ENCODE measurements at regions of chr15 and their contacts with region 1.

Region 1: DNA sequence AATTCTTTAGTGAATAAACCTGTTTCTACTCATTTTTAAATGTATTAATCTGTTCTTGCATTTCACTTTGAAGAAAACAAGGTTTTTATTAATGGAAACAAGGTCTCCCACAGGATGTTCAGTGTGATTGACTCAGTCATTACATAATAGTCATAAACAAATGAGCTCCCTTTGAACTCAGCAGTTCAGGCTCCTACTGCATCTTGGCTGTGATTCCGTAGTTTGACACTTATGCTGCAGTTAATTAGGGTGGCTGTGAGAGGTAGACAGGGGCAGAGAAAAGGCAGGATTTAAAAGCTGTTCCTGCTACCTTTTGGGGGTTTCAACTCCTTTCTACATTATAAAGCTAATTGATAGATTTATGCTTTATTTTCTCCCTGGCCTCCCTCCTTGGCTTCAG is 345.2 kb upstream of the NR2E3 start:
- DNase-seq: no peak
- ATAC-seq: no peak
- H3K4me3 ChIP-seq: no peak overlapping the region
- H3K27ac ChIP-seq: no peak overlapping the region
- H3K4me1 ChIP-seq: no peaks in the 10 kb centered on the region
- CTCF ChIP-seq: no peak
- EP300 ChIP-seq: no peak
- POLR2A ChIP-seq: no peak
- RAD21 ChIP-seq: no peak

Region 2: GRCh38 chr15:71476823-71477222 is 11.7 kb after region 1 on chr15:
- CTCF ChIA-PET with region 1: interaction called, 10 read pairs
- POLR2A ChIA-PET with region 1: no interaction called
- DNase-seq: no peak
- ATAC-seq: no peak
- H3K4me3 ChIP-seq: no peak overlapping the region
- H3K27ac ChIP-seq: no peak overlapping the region
- H3K4me1 ChIP-seq: no peaks in the 10 kb centered on the region
- CTCF ChIP-seq: no peak
- EP300 ChIP-seq: no peak
- POLR2A ChIP-seq: no peak
- RAD21 ChIP-seq: no peak